Activated CD8-positive, alpha-beta memory T cell treated with anti-CD3 and anti-CD28 coated beads, Interleukin-2, amount 10 ng/mL, durations not matched to agents 7 days and 5 days (primary cell): ENCODE measurements at regions of chr18 and their contacts with region 1.

Region 1: GRCh38 chr18:63936156-63936931 is 12.8 kb upstream of the HMSD start:
- DNase-seq: peak; percentile 82
- ATAC-seq: peak; percentile 98
- H3K4me3 Mint-ChIP-seq: peak overlapping the region; percentile 70
- H3K27ac Mint-ChIP-seq: peak overlapping the region; percentile 20
- H3K4me1 Mint-ChIP-seq: peaks cover 4% of the 10 kb centered on the region
- H3K27me3 Mint-ChIP-seq: peaks cover 24% of the 10 kb centered on the region

Region 2: GRCh38 chr18:63518178-63519012 is 417.9 kb before region 1 on chr18:
- CTCF ChIA-PET with region 1: interaction called, 31 read pairs
- DNase-seq: peak; percentile 70
- ATAC-seq: peak; percentile 91
- H3K4me3 Mint-ChIP-seq: no peak overlapping the region
- H3K27ac Mint-ChIP-seq: no peak overlapping the region
- H3K4me1 Mint-ChIP-seq: no peaks in the 10 kb centered on the region
- H3K27me3 Mint-ChIP-seq: peaks cover 38% of the 10 kb centered on the region

Region 3: DNA sequence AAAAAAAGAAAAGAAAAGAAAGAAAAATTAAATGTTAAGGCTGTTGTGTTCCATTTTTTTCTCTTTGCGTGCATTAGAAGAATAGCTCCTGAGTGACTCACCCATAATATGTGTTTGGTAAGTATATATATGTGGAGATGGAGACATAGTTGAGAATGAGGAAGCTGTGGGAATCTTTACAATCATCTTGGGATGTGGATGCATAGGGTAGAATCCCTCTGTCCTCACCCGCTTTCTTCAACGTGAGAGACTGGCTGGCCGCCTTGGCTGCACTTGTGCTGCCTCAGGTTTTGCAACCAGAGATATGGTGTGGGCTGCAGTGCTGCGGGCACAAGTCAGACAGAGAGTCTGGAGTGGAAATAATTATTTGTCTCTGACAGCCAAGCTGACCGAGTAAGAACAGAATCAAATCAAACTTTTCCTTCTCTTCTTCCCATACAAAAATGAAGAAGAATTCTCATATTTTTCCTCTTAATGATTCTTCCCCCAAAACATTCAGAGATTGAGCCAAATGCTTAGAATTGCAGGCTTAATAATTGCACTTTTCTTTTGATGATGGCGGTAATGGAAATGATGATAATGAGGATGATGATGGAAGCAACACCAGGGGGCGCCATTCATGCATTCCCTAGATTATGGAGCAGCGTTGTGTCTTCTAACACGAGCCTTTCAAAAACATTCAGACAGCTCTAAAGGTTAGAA is 112.7 kb before region 1 on chr18:
- CTCF ChIA-PET with region 1: interaction called, 11 read pairs
- DNase-seq: peak; percentile 43
- ATAC-seq: no peak
- H3K4me3 Mint-ChIP-seq: no peak overlapping the region
- H3K27ac Mint-ChIP-seq: no peak overlapping the region
- H3K4me1 Mint-ChIP-seq: no peaks in the 10 kb centered on the region
- H3K27me3 Mint-ChIP-seq: peaks cover 30% of the 10 kb centered on the region

Region 4: GRCh38 chr18:63890950-63891304 is 45.4 kb before region 1 on chr18:
- CTCF ChIA-PET with region 1: no interaction called
- DNase-seq: no peak
- ATAC-seq: no peak
- H3K4me3 Mint-ChIP-seq: no peak overlapping the region
- H3K27ac Mint-ChIP-seq: no peak overlapping the region
- H3K4me1 Mint-ChIP-seq: no peaks in the 10 kb centered on the region
- H3K27me3 Mint-ChIP-seq: peaks cover 15% of the 10 kb centered on the region

Region 5: GRCh38 chr18:63922049-63922448 is 14.3 kb before region 1 on chr18:
- CTCF ChIA-PET with region 1: interaction called, 11 read pairs
- DNase-seq: no peak
- ATAC-seq: no peak
- H3K4me3 Mint-ChIP-seq: no peak overlapping the region
- H3K27ac Mint-ChIP-seq: no peak overlapping the region
- H3K4me1 Mint-ChIP-seq: no peaks in the 10 kb centered on the region
- H3K27me3 Mint-ChIP-seq: peaks cover 45% of the 10 kb centered on the region

Region 6: DNA sequence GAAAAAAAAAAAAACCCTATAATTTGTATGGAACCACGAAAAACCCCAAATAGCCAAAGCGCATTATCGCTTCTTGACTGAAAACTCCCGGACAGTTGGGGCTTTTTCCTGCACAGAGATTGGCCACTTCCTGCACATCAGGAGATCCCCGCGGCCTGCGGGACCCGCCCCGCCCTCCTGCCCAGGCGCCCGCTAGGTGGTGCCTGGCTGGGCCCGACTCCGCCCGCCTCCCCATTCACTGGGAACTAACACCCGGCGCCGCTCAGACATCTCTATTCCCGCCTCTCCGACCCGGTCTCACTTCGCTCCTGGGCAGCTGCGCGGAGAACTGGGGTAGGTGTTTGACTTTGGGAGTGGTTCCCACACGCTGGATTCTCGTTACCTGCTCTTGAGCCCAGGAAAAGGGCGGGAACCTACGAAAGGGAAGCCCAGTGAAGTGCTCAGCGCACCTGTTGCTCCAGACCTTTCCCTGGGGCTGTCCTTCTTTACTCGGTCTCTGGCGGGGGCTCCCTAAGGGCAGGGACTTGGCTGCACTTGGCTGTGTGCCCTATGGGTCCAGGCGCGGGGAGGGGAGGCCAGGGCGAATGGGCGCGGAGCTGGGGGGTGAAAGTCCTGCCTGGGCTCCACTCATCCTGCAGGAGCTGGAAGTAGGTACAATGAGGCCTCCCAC is 12.9 kb after region 1 on chr18 and contains the start of gene HMSD:
- CTCF ChIA-PET with region 1: interaction called, 13 read pairs
- DNase-seq: peak; percentile 69
- ATAC-seq: peak; percentile 93
- H3K4me3 Mint-ChIP-seq: peak within 1 kb of the TSS; percentile 62
- H3K27ac Mint-ChIP-seq: peak within 1 kb of the TSS; percentile 56
- H3K4me1 Mint-ChIP-seq: peaks cover 30% of the 10 kb centered on the region
- H3K27me3 Mint-ChIP-seq: peaks cover 45% of the 10 kb centered on the region
- total RNA-seq, gene HMSD: 1.6 to 5.5 TPM

Region 7: DNA sequence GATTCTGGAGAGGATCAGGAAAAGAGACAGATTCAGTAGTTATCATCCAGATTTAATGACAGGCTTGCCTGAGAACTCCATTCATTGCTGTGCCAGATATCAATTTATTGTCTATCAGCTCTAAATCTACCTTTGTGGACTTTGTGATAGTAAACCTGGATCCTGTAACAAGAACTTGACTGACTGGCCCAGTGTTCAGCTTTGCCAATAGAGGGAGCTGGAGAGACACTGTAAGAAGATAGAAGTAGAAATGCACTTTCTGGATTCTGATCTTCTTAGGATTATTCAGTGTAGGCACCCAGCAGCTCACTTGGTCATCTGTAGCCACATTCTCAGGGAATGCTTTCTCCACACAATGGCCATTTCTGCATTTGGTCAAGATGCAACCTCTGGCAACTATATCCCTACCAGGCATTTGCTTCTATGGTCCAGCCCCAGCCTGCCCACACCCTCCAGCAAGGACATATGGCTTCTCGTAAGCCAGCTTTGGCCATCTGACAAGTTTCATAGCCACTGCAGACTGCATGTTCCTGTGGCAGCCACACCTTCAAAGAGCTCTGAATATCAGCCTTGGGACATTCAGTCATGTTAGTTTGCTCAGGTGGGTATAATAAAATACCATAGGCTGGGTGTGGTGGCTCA is 27.4 kb after region 1 on chr18:
- CTCF ChIA-PET with region 1: interaction called, 17 read pairs
- DNase-seq: peak; percentile 65
- ATAC-seq: peak; percentile 71
- H3K4me3 Mint-ChIP-seq: no peak overlapping the region
- H3K27ac Mint-ChIP-seq: no peak overlapping the region
- H3K4me1 Mint-ChIP-seq: no peaks in the 10 kb centered on the region
- H3K27me3 Mint-ChIP-seq: peaks cover 19% of the 10 kb centered on the region

Region 8: GRCh38 chr18:64027931-64028695 is 91.8 kb after region 1 on chr18:
- CTCF ChIA-PET with region 1: no interaction called
- DNase-seq: no peak
- ATAC-seq: no peak
- H3K4me3 Mint-ChIP-seq: no peak overlapping the region
- H3K27ac Mint-ChIP-seq: no peak overlapping the region
- H3K4me1 Mint-ChIP-seq: no peaks in the 10 kb centered on the region
- H3K27me3 Mint-ChIP-seq: peaks cover 8% of the 10 kb centered on the region